CD8-positive, alpha-beta memory T cell (primary cell): ENCODE measurements at regions of chr21 and their contacts with region 1.

Region 1: DNA sequence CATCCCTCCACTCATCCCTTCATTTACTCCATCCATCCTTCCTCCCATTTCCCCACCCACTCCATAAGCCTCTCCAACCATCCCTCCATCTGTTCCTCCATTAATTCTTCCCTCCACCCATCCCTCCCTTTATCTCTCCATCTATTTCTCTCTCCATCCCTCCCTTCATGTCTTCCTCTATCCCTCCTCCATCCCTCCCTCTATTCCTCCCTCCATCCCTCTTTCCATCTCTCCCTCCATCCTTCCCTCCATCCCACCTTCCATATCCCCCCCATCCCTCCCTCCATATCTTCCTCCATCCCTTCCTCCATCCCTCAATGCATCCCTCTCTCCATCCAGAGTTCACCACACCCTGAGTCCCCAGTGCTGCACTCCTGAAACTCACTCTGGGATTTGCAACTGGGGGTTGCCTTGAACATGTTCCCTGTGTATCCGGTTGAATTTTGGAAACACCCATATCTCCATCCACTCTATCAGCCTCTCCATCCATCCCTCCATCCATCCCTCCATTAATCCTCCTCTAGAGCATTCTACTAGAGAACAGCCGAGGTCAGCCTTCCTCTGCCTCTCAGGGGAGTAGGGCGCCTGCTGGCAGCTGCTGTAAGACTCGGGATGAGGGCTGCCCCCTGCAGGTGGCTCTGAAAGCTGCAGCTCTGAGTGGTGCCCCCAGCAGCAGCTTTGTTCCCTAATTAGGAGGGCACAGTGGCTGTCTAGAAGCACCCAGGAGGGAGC is 39.4 kb downstream of the ABCG1 start:
- DNase-seq: peak; percentile 69 to 85 (median 77)
- H3K4me3 ChIP-seq: no peak overlapping the region
- H3K4me3 Mint-ChIP-seq: no peak overlapping the region
- H3K27ac ChIP-seq: no peak overlapping the region
- H3K27ac Mint-ChIP-seq: peak overlapping the region in 4 of 8 donors; percentile 8 to 77 (median 59)
- H3K4me1 ChIP-seq: peaks cover 5% of the 10 kb centered on the region
- H3K4me1 Mint-ChIP-seq: peaks cover 23 to 37% (median 30%) of the 10 kb centered on the region in 3 donors
- H3K27me3 ChIP-seq: no peaks in the 10 kb centered on the region
- H3K27me3 Mint-ChIP-seq: no peaks in the 10 kb centered on the region

Region 2: DNA sequence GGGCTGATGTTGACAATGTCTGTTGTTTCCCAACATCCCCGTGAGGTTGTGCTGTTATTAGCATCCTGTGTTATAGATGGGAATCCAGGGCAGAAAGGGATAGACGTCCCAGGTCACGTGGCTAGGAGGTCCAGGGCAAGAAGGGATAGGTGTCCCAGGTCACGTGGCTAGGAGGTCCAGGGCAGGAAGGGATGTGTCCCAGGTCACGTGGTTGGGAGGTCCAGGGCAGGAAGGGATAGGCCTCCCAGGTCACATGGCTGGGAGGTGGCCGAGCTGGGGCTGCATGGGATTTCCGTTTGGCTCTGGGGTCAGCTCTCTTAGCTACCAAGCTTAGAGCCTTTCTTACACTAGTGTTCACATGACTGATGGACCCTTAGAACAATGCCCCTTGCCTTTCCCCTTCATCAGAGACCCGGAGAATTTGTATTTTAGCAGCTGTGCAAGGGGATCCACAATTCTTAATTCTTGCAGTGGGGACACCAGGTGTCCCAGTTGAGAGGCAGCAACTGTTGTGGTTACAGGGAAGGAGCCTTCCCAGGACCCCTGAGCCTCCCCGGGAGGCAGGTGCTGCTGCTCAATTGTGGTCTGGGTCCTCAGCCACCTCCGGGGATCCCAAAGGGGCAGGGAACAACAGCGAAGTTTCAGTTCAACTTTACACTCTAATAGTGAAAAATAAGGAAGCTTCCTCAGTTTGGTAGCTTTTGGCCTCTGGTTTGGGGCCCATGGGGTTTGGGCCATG is 118.0 kb before region 1 on chr21:
- CTCF ChIA-PET with region 1: interaction called, 106 read pairs
- POLR2A ChIA-PET with region 1: no interaction called
- DNase-seq: no peak
- H3K4me3 ChIP-seq: no peak overlapping the region
- H3K4me3 Mint-ChIP-seq: no peak overlapping the region
- H3K27ac ChIP-seq: no peak overlapping the region
- H3K27ac Mint-ChIP-seq: peak overlapping the region in 1 of 8 donors; percentile 91
- H3K4me1 ChIP-seq: no peaks in the 10 kb centered on the region
- H3K4me1 Mint-ChIP-seq: peaks cover 4 to 6% (median 5%) of the 10 kb centered on the region in 3 donors
- H3K27me3 ChIP-seq: no peaks in the 10 kb centered on the region
- H3K27me3 Mint-ChIP-seq: peaks cover 9 to 12% of the 10 kb centered on the region in 2 donors

Region 3: DNA sequence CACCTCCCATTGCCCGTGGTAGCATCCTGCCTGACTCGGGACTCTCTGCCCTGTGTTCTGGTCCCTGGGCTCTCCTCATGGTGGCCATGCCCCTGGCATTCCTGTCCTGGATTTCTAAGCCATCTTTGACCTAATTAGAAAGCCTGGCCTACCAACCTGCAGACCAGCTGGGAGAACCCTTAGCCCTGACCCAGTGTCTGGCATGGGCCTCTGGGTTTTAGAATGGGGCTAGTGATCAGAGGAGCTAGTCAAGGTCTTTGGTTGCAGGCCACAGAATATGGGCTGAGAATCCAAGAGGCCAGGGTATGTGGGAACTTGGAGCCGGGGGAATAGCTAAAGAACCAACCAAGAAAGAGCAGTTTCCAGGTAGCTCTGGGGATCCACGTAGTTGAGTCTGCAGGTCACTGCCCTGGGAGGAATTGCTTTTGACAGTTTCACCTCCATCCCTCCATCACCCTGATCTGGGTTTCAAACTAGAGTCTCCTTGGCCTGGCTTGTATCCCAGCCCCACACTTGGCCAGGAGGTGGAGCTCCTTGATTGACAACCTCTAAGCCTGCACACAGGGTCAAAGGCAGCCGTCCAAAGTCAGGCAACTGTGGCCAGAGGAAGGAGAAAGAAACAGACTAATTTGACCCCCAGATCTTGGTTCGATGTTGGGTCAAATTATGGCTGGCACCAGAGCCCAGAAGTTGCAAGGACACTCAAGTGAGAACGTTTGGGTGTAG is 94.1 kb before region 1 on chr21:
- CTCF ChIA-PET with region 1: interaction called, 72 read pairs
- POLR2A ChIA-PET with region 1: no interaction called
- DNase-seq: peak; percentile 19 to 67 (median 35)
- H3K4me3 ChIP-seq: no peak overlapping the region
- H3K4me3 Mint-ChIP-seq: no peak overlapping the region
- H3K27ac ChIP-seq: no peak overlapping the region
- H3K27ac Mint-ChIP-seq: peak overlapping the region in 5 of 8 donors; percentile 26 to 87 (median 31)
- H3K4me1 ChIP-seq: peaks cover 29% of the 10 kb centered on the region
- H3K4me1 Mint-ChIP-seq: peaks cover 7 to 19% (median 16%) of the 10 kb centered on the region in 3 donors
- H3K27me3 ChIP-seq: no peaks in the 10 kb centered on the region
- H3K27me3 Mint-ChIP-seq: peaks cover 0 to 2% of the 10 kb centered on the region in 2 donors

Region 4: DNA sequence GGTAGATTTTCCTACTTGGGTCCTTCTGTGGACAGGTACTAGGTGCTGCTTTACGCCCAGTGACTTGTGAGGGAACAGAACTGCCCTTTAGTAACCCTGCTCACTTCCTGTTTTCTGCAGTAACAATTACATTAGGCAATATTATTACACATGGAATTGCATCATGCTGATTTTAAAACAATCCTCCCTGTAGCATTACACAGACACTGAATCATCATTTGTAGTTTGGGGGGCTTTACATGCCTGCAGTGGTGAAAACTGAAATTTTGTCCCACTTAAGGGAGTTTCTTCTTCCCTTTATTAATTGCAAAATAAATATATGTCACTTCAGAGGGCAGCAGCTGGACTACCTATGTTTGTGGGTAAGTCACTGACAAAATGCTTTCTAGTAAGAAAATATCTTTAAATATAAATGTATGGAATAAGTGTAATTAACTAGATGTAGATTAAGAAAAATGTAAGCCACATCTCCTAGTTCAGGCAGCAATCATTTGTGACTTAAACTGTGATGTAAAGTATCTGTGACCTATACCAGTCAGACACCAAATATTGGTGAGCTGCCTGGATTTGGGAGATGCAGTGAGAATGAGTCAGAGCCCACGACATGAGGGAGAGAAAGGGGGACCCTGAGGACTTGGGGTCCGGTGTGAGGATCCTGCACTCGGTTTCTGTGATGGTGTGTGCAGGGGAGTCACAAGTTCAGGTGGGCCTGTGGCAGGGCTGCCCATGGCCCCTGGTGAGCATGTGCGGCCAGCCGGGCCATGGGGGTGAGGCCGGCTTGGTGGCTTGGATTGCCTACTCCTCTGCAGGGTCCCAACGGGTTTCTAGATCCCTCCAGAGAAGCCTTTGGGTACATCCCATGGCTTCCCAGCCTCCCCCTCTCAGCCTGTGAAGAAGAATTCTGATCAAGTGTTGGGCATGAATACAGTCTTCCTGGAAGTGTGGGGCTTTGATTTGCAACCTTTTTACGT is 58.5 kb before region 1 on chr21:
- CTCF ChIA-PET with region 1: interaction called, 12 read pairs
- POLR2A ChIA-PET with region 1: no interaction called
- DNase-seq: peak in 3 of 5 donors; percentile 35 to 55 (median 50)
- H3K4me3 ChIP-seq: peak overlapping the region; percentile 24
- H3K4me3 Mint-ChIP-seq: peak overlapping the region; percentile 2 to 78 (median 49)
- H3K27ac ChIP-seq: no peak overlapping the region
- H3K27ac Mint-ChIP-seq: peak overlapping the region; percentile 72 to 89 (median 80)
- H3K4me1 ChIP-seq: peaks cover 39% of the 10 kb centered on the region
- H3K4me1 Mint-ChIP-seq: peaks cover 39 to 49% (median 48%) of the 10 kb centered on the region in 3 donors
- H3K27me3 ChIP-seq: no peaks in the 10 kb centered on the region
- H3K27me3 Mint-ChIP-seq: no peaks in the 10 kb centered on the region

Region 5: DNA sequence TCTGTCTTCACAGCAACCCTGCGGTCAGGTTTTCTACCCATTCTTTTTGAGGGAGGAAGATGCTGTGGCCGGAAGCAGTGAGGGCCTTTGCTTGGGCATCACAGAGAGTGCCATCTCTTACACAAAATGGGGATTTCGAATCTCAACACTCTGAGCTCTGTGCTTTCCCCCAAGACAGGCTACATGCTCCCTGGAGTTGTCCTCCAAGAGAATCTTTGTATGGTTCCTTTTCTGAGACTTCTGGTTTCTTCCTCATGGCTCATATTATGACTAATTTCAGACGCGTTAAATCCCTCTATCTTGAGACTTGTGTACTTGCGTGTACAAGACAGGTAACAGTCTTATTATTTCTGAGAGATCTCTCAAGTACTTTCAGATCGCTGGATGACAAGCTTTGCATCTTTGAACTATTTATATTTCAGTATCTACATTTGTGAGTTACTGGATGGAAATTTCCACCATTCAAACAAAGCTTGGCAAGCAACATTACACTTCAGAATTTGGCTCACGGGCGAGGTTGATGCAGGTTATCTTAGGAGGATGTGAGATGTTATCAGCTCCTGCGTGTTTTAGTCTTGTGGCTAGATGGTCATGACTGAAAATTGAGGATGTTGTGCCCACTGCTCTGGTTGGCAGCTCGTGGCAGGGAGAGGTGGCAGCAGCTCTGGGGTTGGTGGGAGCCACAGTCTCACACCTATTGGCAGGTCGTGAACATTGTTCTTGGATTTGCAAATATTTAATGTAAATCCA is 20.0 kb before region 1 on chr21:
- CTCF ChIA-PET with region 1: interaction called, 22 read pairs
- POLR2A ChIA-PET with region 1: interaction called, 3 read pairs
- DNase-seq: peak; percentile 56 to 84 (median 78)
- H3K4me3 ChIP-seq: peak overlapping the region; percentile 20
- H3K4me3 Mint-ChIP-seq: peak overlapping the region; percentile 53 to 82 (median 60)
- H3K27ac ChIP-seq: peak overlapping the region; percentile 60
- H3K27ac Mint-ChIP-seq: peak overlapping the region; percentile 67 to 99 (median 96)
- H3K4me1 ChIP-seq: peaks cover 66% of the 10 kb centered on the region
- H3K4me1 Mint-ChIP-seq: peaks cover 64 to 80% (median 65%) of the 10 kb centered on the region in 3 donors
- H3K27me3 ChIP-seq: no peaks in the 10 kb centered on the region
- H3K27me3 Mint-ChIP-seq: peaks cover 0 to 3% of the 10 kb centered on the region in 2 donors

Region 6: DNA sequence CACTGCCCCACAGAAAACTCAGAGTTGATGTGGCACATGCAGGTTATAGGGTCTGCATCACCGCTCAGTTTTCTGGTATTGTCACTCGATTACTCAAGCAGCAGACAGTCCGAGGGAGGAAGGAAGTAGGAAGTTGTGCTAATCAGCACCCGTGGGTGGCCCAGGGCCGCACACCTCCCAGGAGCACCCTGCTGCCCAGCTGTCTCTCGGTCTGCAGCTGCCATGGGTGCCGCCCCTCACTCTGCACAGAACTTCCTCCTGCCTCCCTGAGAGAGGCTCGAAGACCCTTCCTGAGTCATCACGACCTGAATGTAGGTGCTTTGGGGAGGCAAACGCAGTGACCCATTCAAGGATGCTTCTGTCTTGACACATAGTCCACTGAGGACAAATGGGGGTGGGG is 61.1 kb after region 1 on chr21:
- CTCF ChIA-PET with region 1: no interaction called
- POLR2A ChIA-PET with region 1: no interaction called
- DNase-seq: no peak
- H3K4me3 ChIP-seq: no peak overlapping the region
- H3K4me3 Mint-ChIP-seq: peak overlapping the region in 2 of 7 donors; percentile 20 to 67
- H3K27ac ChIP-seq: no peak overlapping the region
- H3K27ac Mint-ChIP-seq: peak overlapping the region in 3 of 8 donors; percentile 22 to 64 (median 23)
- H3K4me1 ChIP-seq: no peaks in the 10 kb centered on the region
- H3K4me1 Mint-ChIP-seq: peaks cover 6 to 7% (median 7%) of the 10 kb centered on the region in 3 donors
- H3K27me3 ChIP-seq: no peaks in the 10 kb centered on the region
- H3K27me3 Mint-ChIP-seq: peaks cover 1 to 21% of the 10 kb centered on the region in 2 donors

Region 7: GRCh38 chr21:42398558-42399028 is 140.3 kb after region 1 on chr21:
- CTCF ChIA-PET with region 1: no interaction called
- POLR2A ChIA-PET with region 1: no interaction called
- DNase-seq: no peak
- H3K4me3 ChIP-seq: no peak overlapping the region
- H3K4me3 Mint-ChIP-seq: no peak overlapping the region
- H3K27ac ChIP-seq: no peak overlapping the region
- H3K27ac Mint-ChIP-seq: peak overlapping the region in 1 of 8 donors; percentile 61
- H3K4me1 ChIP-seq: peaks cover 45% of the 10 kb centered on the region
- H3K4me1 Mint-ChIP-seq: peaks cover 29 to 58% (median 48%) of the 10 kb centered on the region in 3 donors
- H3K27me3 ChIP-seq: no peaks in the 10 kb centered on the region
- H3K27me3 Mint-ChIP-seq: peaks cover 0 to 2% of the 10 kb centered on the region in 2 donors